ENCODE measurements at regions of chr12 and their contacts with region 1.

Region 1: DNA sequence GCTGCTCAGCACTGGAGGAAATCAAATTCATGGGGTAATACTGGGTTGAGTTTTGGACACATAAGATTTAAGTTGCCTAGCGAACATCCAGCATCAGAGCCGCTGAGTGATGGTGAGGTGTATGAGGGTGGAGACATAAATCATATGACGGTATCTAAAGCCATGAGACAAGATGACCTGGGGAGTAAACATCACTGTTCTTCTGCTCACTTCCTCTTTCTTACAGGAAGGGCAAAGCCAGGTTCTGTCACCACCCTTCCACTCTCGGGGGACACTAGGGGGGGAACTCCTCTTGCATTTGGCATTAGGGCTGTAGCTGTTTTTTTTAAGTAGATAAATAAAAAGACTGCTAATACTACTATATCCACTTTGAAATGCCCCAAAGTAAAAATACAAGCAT is 24.0 kb downstream of the PRDM4 start:
- DNase-seq: peak; percentile 53
- ATAC-seq: peak; percentile 99
- H3K4me3 Mint-ChIP-seq: peak overlapping the region; percentile 53
- H3K27ac Mint-ChIP-seq: peak overlapping the region; percentile 93
- H3K4me1 Mint-ChIP-seq: peaks cover 72% of the 10 kb centered on the region
- H3K27me3 Mint-ChIP-seq: no peaks in the 10 kb centered on the region
- CTCF ChIP-seq: no peak

Region 2: GRCh38 chr12:107685360-107686248 is 51.3 kb before region 1 on chr12 and contains the start of gene PWP1:
- CTCF ChIA-PET with region 1: no interaction called
- POLR2A ChIA-PET with region 1: interaction called, 9 read pairs
- intact Hi-C with region 1: loop called (anchors 1 kb)
- DNase-seq: peak; percentile 93
- ATAC-seq: peak; percentile 90
- H3K4me3 Mint-ChIP-seq: peak within 1 kb of the TSS; percentile 96
- H3K27ac Mint-ChIP-seq: peak within 1 kb of the TSS; percentile 97
- H3K4me1 Mint-ChIP-seq: peaks cover 23% of the 10 kb centered on the region
- H3K27me3 Mint-ChIP-seq: no peaks in the 10 kb centered on the region
- CTCF ChIP-seq: no peak
- total RNA-seq, gene PWP1: 49.4 and 53.5 TPM in 2 replicates

Region 3: DNA sequence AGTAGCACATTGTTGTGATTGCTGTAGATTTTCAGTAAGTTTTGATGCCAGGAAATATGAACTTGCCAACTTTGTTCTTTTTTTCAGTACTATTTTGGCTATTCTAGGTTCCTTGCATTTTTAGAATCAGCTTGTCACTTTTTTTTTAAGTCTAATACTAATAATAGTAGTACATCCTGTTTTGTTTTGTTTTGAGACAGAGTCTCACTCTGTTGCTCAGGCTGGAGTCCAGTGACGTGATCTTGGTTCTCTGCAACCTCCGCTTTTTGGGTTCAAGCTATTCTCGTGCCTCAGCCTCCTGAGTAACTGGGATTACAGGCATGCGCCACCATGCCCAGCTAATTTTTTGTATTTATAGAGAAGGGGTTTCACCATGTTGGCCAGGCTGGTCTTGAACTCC is 34.8 kb before region 1 on chr12:
- CTCF ChIA-PET with region 1: interaction called, 3 read pairs
- POLR2A ChIA-PET with region 1: no interaction called
- intact Hi-C with region 1: loop called (anchors 5 kb)
- DNase-seq: no peak
- ATAC-seq: peak; percentile 40
- H3K4me3 Mint-ChIP-seq: no peak overlapping the region
- H3K27ac Mint-ChIP-seq: peak overlapping the region; percentile 61
- H3K4me1 Mint-ChIP-seq: peaks cover 31% of the 10 kb centered on the region
- H3K27me3 Mint-ChIP-seq: no peaks in the 10 kb centered on the region
- CTCF ChIP-seq: no peak

Measured in activated B cell treated with CpG ODN at 0.5 μM for 24 hours (primary cell).